A673 (cell line): ENCODE measurements at regions of chr13 and their contacts with region 1.

Region 1: GRCh38 chr13:76852986-76853385 is 33.2 kb downstream of the KCTD12 start:
- DNase-seq: no peak
- H3K4me3 ChIP-seq: no peak overlapping the region
- H3K27ac ChIP-seq: no peak overlapping the region
- H3K4me1 ChIP-seq: no peaks in the 10 kb centered on the region
- H3K27me3 ChIP-seq: no peaks in the 10 kb centered on the region
- CTCF ChIP-seq: no peak

Region 2: GRCh38 chr13:76656500-76656899 is 196.5 kb before region 1 on chr13:
- CTCF ChIA-PET with region 1: no interaction called
- POLR2A ChIA-PET with region 1: no interaction called
- intact Hi-C with region 1: no loop called
- DNase-seq: no peak
- H3K4me3 ChIP-seq: no peak overlapping the region
- H3K27ac ChIP-seq: no peak overlapping the region
- H3K4me1 ChIP-seq: no peaks in the 10 kb centered on the region
- H3K27me3 ChIP-seq: no peaks in the 10 kb centered on the region
- CTCF ChIP-seq: no peak

Region 3: DNA sequence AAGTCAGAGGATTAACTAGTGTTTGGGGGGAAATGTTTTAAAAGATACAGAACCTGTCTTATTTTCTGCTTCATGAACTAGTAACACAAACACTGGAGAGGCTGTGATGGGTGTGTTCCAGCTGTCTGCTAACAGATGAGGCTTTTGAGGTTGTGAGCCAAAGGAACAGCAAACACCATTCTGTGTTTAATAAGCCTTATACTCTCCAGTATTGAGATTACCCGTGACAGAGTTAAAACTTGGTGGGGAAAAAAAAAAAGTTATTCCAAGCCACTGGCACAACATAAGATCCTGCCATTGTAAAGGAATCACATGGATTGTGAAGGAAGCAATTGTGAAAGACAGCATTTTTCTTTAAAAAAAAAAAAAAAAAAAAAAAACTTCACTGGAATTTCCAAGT is 15.2 kb before region 1 on chr13:
- CTCF ChIA-PET with region 1: no interaction called
- POLR2A ChIA-PET with region 1: interaction called, 13 read pairs
- intact Hi-C with region 1: no loop called
- DNase-seq: no peak
- H3K4me3 ChIP-seq: no peak overlapping the region
- H3K27ac ChIP-seq: no peak overlapping the region
- H3K4me1 ChIP-seq: no peaks in the 10 kb centered on the region
- H3K27me3 ChIP-seq: no peaks in the 10 kb centered on the region
- CTCF ChIP-seq: no peak

Region 4: GRCh38 chr13:76868371-76868770 is 15.4 kb after region 1 on chr13:
- CTCF ChIA-PET with region 1: no interaction called
- POLR2A ChIA-PET with region 1: no interaction called
- intact Hi-C with region 1: no loop called
- DNase-seq: no peak
- H3K4me3 ChIP-seq: no peak overlapping the region
- H3K27ac ChIP-seq: no peak overlapping the region
- H3K4me1 ChIP-seq: no peaks in the 10 kb centered on the region
- H3K27me3 ChIP-seq: no peaks in the 10 kb centered on the region
- CTCF ChIP-seq: no peak

Region 5: GRCh38 chr13:76885203-76886004 is 32.4 kb after region 1 on chr13:
- CTCF ChIA-PET with region 1: no interaction called
- POLR2A ChIA-PET with region 1: interaction called, 13 read pairs
- intact Hi-C with region 1: no loop called
- DNase-seq: peak; percentile 50
- H3K4me3 ChIP-seq: peak overlapping the region; percentile 58
- H3K27ac ChIP-seq: no peak overlapping the region
- H3K4me1 ChIP-seq: peaks cover 10% of the 10 kb centered on the region
- H3K27me3 ChIP-seq: peaks cover 43% of the 10 kb centered on the region
- CTCF ChIP-seq: peak; percentile 36; the same call in 1 of the 2 replicates